Esophagus squamous epithelium (tissue), 5 donors: ENCODE measurements at regions of chr12 and their contacts with region 1.

Region 1: DNA sequence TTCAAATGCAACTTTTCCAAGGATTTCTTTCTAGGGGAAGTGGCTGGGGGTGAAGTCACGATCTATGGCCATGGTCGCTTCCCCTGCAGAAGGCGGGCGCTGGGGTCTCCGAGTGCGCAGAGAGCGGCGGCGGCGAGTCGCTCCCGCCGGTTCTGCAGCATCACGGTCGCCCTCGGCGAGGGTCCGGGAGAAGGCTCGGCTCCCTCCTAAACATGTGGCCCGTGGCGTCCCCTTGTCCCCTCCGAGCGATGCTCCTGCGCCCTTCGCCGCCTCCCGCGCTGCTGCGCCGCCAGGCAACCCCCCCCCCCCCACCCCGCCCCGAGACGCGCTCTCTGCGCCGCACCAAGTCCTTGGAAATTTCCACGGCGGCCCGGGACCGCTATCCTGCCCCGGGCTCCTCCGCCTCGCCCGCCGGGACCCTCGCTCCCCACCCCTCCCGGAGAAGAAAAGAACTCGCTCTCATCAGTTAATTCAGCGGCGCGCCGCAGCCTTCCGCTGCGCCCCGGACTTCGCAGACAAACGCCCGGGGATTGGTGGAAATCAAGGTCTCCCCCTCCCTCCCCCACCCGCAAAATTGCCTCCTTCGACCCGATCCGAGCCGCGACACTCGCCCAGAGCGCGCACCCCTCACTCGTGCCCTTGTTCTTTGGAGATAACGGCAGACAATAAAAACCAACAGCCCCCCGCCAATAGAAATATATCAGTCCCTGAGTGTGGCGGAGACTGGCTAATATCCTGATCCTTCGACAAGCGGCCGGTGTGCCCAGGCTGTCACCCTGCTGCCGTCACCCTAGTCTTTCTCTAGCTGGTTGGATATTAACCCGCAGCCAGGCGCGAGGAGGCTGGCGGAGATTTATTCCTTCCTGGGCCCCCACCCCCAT is at the start of gene ST8SIA1:
- DNase-seq: no peak
- H3K4me3 ChIP-seq: peak within 1 kb of the TSS; percentile 30 to 74 (median 62)
- H3K27ac ChIP-seq: peak within 1 kb of the TSS; percentile 48 to 84 (median 79)
- H3K4me1 ChIP-seq: peaks cover 0 to 40% (median 0%) of the 10 kb centered on the region in 3 donors
- H3K27me3 ChIP-seq: peaks cover 0 to 26% (median 0%) of the 10 kb centered on the region in 4 donors
- CTCF ChIP-seq: no peak
- POLR2A ChIP-seq: peak in 1 of 4 donors; percentile 8
- total RNA-seq, gene ST8SIA1: 0.38 to 5.3 (median 1.0) TPM

Region 2: GRCh38 chr12:22100958-22101748 is 233.5 kb before region 1 on chr12:
- intact Hi-C with region 1: loop called (anchors 10 kb)
- DNase-seq: no peak
- H3K4me3 ChIP-seq: no peak overlapping the region
- H3K27ac ChIP-seq: peak overlapping the region in 1 of 4 donors; percentile 28
- H3K4me1 ChIP-seq: peaks cover 7 to 16% (median 13%) of the 10 kb centered on the region in 3 donors
- H3K27me3 ChIP-seq: no peaks in the 10 kb centered on the region
- CTCF ChIP-seq: peak; percentile 39 to 68 (median 45)
- POLR2A ChIP-seq: no peak

Region 3: DNA sequence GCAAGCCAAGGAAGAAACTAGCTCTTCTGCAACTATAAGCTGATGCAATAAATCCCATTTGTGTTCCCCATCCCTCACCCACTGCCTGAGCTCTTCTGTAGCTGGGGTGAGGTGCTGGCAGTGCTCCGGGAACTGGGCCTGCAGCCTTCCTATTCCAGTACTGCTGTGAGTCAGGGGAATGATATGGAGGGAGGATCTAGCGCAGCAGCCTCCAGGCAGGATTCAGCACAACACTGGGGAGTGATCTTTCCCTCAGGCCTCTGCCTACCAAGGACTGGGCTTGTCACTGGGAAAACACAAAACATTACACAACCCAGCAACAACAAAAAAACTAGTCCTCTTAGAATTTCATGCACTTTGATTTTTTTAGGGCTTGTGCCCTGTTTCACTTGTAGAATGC is 58.8 kb before region 1 on chr12:
- intact Hi-C with region 1: loop called (anchors 10 kb)
- DNase-seq: peak; percentile 25
- H3K4me3 ChIP-seq: peak overlapping the region in 2 of 4 donors; percentile 14 to 39
- H3K27ac ChIP-seq: peak overlapping the region; percentile 66 to 90 (median 84)
- H3K4me1 ChIP-seq: peaks cover 7 to 47% (median 27%) of the 10 kb centered on the region in 3 donors
- H3K27me3 ChIP-seq: no peaks in the 10 kb centered on the region
- CTCF ChIP-seq: no peak
- POLR2A ChIP-seq: no peak

Region 4: DNA sequence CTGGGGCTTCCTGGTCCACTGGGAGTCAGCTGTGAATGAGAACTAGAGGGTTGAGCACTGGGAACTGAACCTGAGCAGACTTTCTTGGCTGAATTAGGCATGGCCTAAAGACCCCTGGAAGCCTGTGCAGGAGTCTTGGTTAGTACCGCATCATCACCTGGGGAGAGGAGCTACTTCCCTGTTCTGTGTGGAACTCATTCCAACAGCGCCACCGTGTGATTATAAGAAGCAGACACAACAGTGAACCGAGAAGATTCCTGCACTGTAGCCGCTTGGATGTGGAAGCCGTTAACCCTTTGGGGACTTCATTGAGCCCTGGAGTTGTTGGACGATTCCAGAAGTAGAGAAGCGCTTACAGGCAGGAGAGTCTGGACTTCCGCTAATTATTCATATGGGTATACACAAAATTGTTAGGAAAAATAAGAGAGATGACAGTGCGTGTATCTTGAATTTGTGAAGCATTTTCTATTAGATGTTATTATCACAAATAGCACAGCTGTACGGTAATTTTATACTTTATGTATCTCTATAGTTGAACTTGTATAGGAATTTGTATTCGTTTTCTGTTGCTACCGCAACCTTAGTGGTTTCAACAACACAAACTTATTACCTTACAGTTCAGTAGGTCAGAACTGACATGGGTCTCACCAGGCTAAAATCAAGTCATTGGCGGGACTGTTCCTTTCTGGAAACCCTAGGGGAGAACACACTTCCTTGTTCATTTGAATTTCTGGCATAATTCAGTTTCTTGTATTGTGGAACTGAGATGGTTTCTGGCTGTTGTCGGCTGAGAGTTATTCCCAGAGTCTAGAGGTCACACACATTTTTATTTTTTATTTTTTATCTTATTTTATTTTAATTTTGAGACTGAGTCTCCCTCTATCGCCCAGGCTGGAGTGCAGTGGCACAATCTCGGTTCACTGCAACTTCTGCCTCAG is 109.0 kb after region 1 on chr12:
- intact Hi-C with region 1: loop called (anchors 10 kb)
- DNase-seq: peak; percentile 2
- H3K4me3 ChIP-seq: no peak overlapping the region
- H3K27ac ChIP-seq: no peak overlapping the region
- H3K4me1 ChIP-seq: peaks cover 0 to 7% (median 4%) of the 10 kb centered on the region in 3 donors
- H3K27me3 ChIP-seq: no peaks in the 10 kb centered on the region
- CTCF ChIP-seq: peak in 5 of 6 experiments; percentile 67 to 84 (median 74)
- POLR2A ChIP-seq: no peak